ENCODE measurements at regions of chr1 and their contacts with region 1.

Region 1: DNA sequence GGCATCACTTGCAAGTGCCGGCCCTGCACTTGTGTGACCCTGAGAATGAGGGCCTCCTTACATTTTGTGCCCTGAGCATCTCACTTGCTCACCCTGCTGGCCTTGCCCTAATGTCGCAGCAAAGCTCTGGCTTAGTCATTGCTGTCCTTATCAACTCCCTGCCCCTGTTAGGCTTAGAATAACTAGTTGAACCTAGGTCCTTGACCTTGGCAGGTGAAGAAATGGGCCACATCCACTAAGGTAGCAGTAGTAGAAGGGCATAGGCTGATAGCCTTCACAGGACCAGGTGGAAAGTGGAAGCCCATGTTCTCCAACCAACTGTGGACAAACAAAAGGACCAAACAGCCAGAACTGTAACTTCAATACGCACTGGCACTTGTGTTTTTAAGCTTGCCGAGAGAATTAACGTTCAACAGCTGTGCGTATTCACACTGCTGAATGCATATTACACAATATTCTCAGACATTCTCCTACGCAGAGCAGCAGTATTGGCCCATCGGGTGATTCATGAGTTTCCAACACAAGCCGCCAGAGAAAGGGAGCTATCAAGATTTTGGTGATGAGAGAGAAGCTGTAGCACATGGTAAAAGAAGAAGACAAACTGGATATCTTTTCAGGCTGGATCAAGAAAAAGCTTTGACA is 27.7 kb upstream of the PTGFRN start:
- DNase-seq: peak in 1 of 2 experiments; percentile 54
- H3K4me3 ChIP-seq: no peak overlapping the region
- H3K27ac ChIP-seq: peak overlapping the region; percentile 26; the same call in 1 of the 2 replicates
- H3K4me1 ChIP-seq: peaks cover 4 to 20% (median 19%) of the 10 kb centered on the region in 4 experiments
- H3K27me3 ChIP-seq: no peaks in the 10 kb centered on the region
- CTCF ChIP-seq: peak; percentile 76 to 91 (median 79)
- EP300 ChIP-seq: no peak
- POLR2A ChIP-seq: no peak
- RAD21 ChIP-seq: peak; percentile 84 to 91

Region 2: DNA sequence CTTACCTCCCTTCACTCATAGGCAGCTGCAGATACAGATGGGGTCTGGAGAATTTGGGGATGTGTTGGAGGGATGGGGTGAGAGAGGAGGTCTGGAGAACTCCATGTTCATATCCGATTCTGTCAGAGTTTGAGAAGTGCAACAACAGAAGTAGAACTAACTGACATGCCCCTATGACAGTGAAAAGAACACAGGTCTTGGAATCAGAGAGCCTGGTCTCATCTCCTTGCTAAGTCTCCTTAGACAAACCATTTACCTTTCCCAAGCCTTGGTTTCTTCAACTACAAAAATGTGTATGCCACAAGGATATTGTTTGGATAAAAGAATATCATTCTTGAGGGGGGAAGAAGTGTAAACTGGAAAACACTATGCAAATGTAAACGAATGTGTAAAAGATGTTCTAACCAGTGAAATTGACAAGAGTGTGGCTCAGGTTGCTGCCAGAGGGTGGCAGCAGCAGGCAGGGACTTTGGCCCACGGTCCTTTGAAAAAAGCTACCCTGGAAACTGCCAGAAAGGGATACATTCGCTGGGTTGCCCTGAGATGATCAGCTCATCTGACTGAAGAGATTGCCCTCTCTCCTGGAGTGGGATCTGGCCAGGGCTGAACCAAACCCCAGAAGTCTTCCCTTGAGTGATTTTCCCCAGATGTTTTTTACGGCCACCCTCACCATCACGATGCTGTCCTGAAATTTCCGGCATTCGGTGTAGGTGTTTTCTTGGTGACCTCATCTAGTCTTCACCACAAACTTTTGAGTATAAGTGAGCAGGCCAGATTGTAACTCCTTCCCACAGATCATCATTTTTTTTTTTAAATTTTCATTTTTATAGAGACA is 144.8 kb before region 1 on chr1:
- CTCF ChIA-PET with region 1: interaction called, 79 read pairs
- POLR2A ChIA-PET with region 1: no interaction called
- DNase-seq: peak; percentile 31 to 68
- H3K4me3 ChIP-seq: no peak overlapping the region
- H3K27ac ChIP-seq: no peak overlapping the region
- H3K4me1 ChIP-seq: no peaks in the 10 kb centered on the region
- H3K27me3 ChIP-seq: peaks cover 0 to 2% (median 0%) of the 10 kb centered on the region in 4 experiments; a peak in 1 of 7 replicates
- CTCF ChIP-seq: peak; percentile 85 to 90 (median 89)
- EP300 ChIP-seq: no peak
- POLR2A ChIP-seq: no peak
- RAD21 ChIP-seq: peak; percentile 97

Region 3: GRCh38 chr1:116817582-116818064 is 64.4 kb before region 1 on chr1:
- CTCF ChIA-PET with region 1: interaction called, 25 read pairs
- POLR2A ChIA-PET with region 1: no interaction called
- DNase-seq: peak; percentile 41 to 68
- H3K4me3 ChIP-seq: no peak overlapping the region
- H3K27ac ChIP-seq: no peak overlapping the region
- H3K4me1 ChIP-seq: no peaks in the 10 kb centered on the region
- H3K27me3 ChIP-seq: no peaks in the 10 kb centered on the region
- CTCF ChIP-seq: peak; percentile 59 to 97 (median 73)
- EP300 ChIP-seq: no peak
- POLR2A ChIP-seq: no peak
- RAD21 ChIP-seq: peak; percentile 63 to 75

Region 4: DNA sequence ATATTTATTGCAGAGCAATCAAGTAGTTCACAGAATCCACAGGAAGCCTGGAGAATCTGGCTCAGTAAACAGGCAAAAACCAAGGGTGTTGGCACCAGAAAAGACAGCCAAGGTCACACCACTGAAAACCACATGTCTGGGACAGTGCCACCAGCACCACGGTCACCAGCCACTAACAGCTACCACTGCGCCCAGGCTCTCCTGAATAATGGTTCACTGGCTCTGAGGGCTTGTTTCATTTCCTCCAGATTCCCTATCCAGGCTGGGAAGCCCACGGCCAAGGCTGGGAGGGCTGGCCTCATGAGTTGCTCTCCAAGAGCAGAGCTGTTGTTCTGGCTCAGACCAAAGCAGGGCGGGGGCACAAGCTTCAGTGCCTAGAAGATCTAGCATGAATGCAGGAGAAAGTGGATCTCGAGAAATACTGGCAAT is 26.8 kb before region 1 on chr1:
- CTCF ChIA-PET with region 1: interaction called, 15 read pairs
- POLR2A ChIA-PET with region 1: interaction called, 3 read pairs
- DNase-seq: no peak
- H3K4me3 ChIP-seq: no peak overlapping the region; a peak in 1 of 8 replicates
- H3K27ac ChIP-seq: no peak overlapping the region
- H3K4me1 ChIP-seq: peaks cover 17 to 32% (median 29%) of the 10 kb centered on the region in 4 experiments
- H3K27me3 ChIP-seq: no peaks in the 10 kb centered on the region
- CTCF ChIP-seq: no peak
- EP300 ChIP-seq: no peak
- POLR2A ChIP-seq: no peak
- RAD21 ChIP-seq: no peak

Region 5: GRCh38 chr1:116909510-116910378 is 27.7 kb after region 1 on chr1 and contains the start of gene PTGFRN:
- CTCF ChIA-PET with region 1: interaction called, 14 read pairs
- POLR2A ChIA-PET with region 1: no interaction called
- DNase-seq: peak; percentile 39 to 86
- H3K4me3 ChIP-seq: peak within 1 kb of the TSS; percentile 63 to 92 (median 85)
- H3K27ac ChIP-seq: peak within 1 kb of the TSS; percentile 47; the same call in 1 of the 2 replicates
- H3K4me1 ChIP-seq: peaks cover 0 to 18% (median 13%) of the 10 kb centered on the region in 4 experiments; a peak in 4 of 7 replicates
- H3K27me3 ChIP-seq: no peaks in the 10 kb centered on the region
- CTCF ChIP-seq: no peak
- EP300 ChIP-seq: no peak
- POLR2A ChIP-seq: no peak
- RAD21 ChIP-seq: no peak; a peak in 1 of 4 replicates
- total RNA-seq, gene PTGFRN: 32.6 TPM in 2 replicates

Region 6: DNA sequence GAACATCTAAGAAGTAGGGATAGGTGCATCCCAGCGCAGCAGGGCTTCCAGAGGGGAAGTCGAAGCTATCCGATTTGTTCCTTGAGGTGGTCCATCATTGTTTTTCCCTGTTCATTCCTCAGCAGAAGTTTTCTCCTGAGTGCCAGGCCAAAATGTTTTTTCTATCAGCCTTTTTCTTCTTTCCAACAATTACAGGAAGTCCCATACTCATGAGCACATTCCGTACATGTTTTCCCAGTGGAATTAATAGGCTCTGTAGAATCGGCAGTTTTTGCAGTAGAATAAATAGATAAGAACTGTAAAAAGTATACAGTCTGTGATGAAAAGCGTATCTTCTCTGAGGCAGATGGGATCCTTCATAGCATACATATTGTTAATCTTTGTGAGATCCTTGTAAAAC is 144.4 kb after region 1 on chr1:
- CTCF ChIA-PET with region 1: no interaction called
- POLR2A ChIA-PET with region 1: no interaction called
- DNase-seq: no peak
- H3K4me3 ChIP-seq: no peak overlapping the region
- H3K27ac ChIP-seq: no peak overlapping the region
- H3K4me1 ChIP-seq: no peaks in the 10 kb centered on the region
- H3K27me3 ChIP-seq: no peaks in the 10 kb centered on the region
- CTCF ChIP-seq: no peak
- EP300 ChIP-seq: no peak
- POLR2A ChIP-seq: no peak
- RAD21 ChIP-seq: no peak

Measured in H1 (cell line).